AG04450 (cell line): ENCODE measurements at regions of chr11 and their contacts with region 1.

Region 1: DNA sequence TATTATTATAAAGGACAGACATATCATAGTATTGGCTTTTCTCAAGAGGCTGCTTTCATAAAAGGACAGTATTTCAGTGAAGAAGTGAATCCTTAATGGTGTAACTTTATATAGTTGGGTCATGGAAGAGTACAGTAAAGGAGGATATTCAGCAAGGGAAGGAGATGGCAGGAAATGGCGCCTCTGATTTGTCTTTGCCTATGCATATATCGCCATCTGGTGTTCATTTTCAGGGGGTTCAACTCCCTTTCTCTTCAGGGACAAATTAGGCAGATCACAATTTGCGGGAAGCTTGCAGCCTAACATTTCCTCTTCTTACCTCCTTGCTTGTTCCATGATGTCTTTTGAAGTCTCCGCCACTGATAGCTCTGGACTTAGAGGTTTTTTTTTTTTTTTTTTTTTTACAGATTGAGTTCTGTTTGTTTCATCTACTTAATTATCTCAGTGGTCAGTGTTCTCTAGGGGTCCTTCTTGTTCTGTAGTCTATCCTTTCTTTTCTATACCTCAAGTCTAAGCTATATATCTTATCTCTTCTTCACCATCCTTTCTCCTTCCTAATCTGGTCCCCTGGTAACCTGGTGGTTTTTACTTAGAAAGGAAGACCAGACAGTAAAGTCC is 21.8 kb upstream of the RRM1 start:
- DNase-seq: peak; percentile 52
- H3K4me3 ChIP-seq: no peak overlapping the region
- H3K27ac ChIP-seq: no peak overlapping the region
- H3K27me3 ChIP-seq: no peaks in the 10 kb centered on the region
- CTCF ChIP-seq: peak; percentile 91

Region 2: GRCh38 chr11:3797329-3798095 is 275.3 kb before region 1 on chr11 and contains the start of gene NUP98:
- CTCF ChIA-PET with region 1: interaction called, 10 read pairs
- POLR2A ChIA-PET with region 1: interaction called, 3 read pairs
- DNase-seq: peak; percentile 100
- H3K4me3 ChIP-seq: peak within 1 kb of the TSS; percentile 98
- H3K27ac ChIP-seq: peak within 1 kb of the TSS; percentile 93
- H3K27me3 ChIP-seq: no peaks in the 10 kb centered on the region
- CTCF ChIP-seq: no peak
- polyA plus RNA-seq, gene NUP98: 90.7 and 101 TPM in 2 replicates

Region 3: DNA sequence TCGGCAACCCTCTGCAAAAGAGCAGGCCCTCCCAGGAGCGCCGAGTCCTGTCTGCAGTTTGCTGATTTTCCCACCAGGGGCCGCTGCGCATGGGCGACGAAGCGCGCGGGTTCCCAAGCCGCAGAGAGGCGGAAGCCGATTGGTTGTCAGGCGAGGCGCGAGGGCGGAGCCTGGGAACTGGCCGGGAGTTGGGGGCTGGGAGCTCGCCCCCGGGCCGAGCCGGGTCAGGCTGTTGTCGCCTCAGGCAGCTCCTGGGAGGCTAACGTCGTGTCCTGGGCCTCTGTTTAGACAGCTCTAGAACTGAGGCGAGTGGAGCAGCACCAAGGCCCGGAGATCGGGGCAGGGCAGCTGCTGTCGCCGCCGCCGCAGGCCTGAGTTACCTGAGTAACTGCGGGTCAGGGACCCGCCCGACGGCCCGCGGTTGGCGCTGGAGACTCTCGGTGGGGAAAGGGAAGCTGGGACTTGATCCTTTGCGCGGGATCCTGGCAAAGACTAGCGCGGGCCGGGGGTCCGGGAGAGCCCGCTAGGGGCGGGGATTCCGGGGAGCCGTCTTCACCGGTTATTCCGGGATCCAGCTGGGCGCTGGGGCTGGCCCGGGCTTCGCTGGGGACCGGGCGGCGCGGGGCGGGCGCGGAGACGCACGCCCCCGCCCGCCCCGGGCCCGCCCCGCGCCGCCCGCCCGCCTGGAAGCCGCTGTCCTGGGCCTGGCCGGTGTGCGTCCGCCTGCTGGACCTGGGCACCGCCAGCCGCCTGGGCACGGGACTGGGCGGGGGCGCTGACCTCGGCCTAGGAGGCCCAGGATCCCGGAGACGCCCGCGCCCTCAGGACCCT is 217.6 kb before region 1 on chr11 and contains the start of gene STIM1:
- CTCF ChIA-PET with region 1: interaction called, 1,559 read pairs
- POLR2A ChIA-PET with region 1: interaction called, 9 read pairs
- DNase-seq: peak; percentile 83
- H3K4me3 ChIP-seq: peak within 1 kb of the TSS; percentile 85
- H3K27ac ChIP-seq: peak within 1 kb of the TSS; percentile 73
- H3K27me3 ChIP-seq: no peaks in the 10 kb centered on the region
- CTCF ChIP-seq: peak; percentile 87
- polyA plus RNA-seq, gene STIM1: 19.7 and 23.4 TPM in 2 replicates

Region 4: GRCh38 chr11:3927133-3927796 is 145.5 kb before region 1 on chr11:
- CTCF ChIA-PET with region 1: interaction called, 13 read pairs
- POLR2A ChIA-PET with region 1: no interaction called
- DNase-seq: no peak
- H3K4me3 ChIP-seq: no peak overlapping the region
- H3K27ac ChIP-seq: no peak overlapping the region
- H3K27me3 ChIP-seq: no peaks in the 10 kb centered on the region
- CTCF ChIP-seq: no peak

Region 5: GRCh38 chr11:3995949-3996554 is 76.7 kb before region 1 on chr11:
- CTCF ChIA-PET with region 1: interaction called, 10 read pairs
- POLR2A ChIA-PET with region 1: no interaction called
- DNase-seq: no peak
- H3K4me3 ChIP-seq: no peak overlapping the region
- H3K27ac ChIP-seq: no peak overlapping the region
- H3K27me3 ChIP-seq: no peaks in the 10 kb centered on the region
- CTCF ChIP-seq: no peak

Region 6: GRCh38 chr11:4050138-4050537 is 22.6 kb before region 1 on chr11:
- CTCF ChIA-PET with region 1: interaction called, 91 read pairs
- POLR2A ChIA-PET with region 1: no interaction called
- DNase-seq: no peak
- H3K4me3 ChIP-seq: no peak overlapping the region
- H3K27ac ChIP-seq: no peak overlapping the region
- H3K27me3 ChIP-seq: no peaks in the 10 kb centered on the region
- CTCF ChIP-seq: no peak

Region 7: GRCh38 chr11:4187055-4187988 is 114.5 kb after region 1 on chr11:
- CTCF ChIA-PET with region 1: no interaction called
- POLR2A ChIA-PET with region 1: no interaction called
- DNase-seq: peak; percentile 49
- H3K4me3 ChIP-seq: peak overlapping the region; percentile 68
- H3K27ac ChIP-seq: no peak overlapping the region
- H3K27me3 ChIP-seq: peaks cover 2% of the 10 kb centered on the region
- CTCF ChIP-seq: peak; percentile 81